GM18951 (cell line): ENCODE measurements at regions of chr9 and their contacts with region 1.

Region 1: DNA sequence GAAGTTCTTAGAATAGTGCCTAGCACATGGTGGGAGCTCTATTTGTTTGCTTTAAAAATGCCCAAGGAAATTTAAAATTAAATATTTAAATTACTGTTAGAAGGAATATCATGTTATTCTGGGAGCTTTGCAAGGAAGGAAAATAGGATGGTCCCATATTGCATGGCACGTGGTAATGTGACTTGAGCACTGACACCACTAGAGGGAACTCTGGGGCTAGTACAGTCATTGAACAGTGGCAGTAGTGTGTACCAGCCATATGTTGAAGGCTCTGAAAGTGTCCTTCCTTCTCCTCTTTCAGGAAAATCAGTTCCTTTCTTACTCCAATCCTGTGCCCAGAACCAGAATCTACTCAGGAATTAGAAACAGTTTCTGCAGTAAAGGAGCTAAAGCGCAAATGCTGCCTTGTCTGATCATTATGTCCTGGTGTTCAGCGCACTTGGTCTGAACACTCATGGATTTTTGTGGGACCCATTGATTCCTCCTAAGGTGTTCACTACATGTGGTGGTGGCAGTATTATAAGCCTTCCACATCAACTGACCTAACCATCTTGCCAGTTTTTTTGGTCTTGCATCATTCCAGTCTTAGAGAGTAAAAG is 54.1 kb downstream of the GDA start:
- POLR2A ChIP-seq: no peak

Region 2: DNA sequence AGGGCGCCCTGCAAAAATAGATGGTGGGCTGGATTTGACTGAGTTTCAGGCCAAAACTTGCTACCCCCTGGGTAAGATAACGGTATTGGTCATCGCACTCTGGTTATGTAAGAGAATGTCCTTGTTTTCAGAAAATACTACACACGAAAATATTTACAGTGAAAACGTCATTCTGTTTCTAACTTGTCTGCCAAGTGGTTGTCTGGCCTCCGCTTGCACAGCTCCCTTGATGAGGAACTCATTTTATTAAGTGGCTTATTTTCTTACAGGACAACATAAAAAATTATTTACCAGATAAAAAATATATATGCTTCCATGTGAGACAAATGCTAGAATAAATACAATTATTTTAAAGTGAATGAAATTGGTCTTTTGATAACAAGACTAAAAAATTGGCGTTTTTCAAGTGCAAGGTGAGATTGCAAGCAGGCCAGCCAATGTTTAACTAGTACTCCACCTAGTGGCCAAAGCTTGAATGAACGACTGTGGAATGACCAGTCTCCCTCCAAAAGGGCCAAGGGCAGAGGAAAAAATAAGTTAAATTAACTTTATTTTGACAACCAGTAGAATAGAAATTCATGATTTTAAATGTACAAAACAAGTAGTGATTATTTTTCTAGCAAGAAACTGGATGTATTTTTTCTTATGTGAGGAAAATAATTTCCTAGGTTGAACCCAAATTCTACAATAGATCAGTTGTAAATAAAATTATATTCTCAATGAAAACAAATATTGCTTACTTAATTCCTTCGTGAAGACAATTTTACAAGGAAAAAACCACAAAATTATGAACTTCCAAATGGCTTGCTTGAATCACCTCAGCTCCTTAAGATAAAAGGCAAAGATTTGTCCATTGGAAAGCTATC is 68.5 kb after region 1 on chr9:
- in situ Hi-C with region 1: loop called (anchors 5 kb)
- POLR2A ChIP-seq: no peak

Region 3: DNA sequence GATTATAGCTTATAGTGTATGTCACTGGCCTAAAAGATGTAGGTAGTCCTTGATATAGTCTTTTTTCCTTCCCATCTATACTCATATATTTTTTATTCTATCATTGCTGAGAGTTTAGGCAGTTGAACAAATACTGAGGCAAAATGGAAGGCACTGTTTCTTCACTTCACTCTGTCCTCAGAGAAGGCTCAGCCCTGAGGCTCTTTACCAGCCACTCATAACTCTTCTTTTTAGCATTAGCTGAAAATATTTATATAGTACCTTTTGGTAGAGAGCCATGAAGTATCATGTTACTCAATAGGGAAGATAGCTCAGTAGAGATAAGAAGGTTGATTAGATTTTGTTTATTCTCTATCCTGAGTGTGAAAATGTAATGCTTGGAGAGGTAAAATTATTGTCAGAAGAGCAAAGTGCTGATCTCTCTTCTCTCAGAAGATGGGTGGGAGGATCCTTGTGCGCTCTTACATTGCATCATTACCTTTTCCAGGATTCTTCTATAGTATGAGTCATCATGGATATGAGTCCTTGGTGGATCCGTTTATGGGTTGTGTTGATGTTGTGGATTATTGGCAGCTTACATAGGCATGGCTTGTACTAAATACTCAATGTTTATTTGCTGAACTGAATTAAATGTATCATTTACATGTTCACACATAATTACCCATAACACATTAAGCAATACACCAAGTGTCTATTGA is 1036.4 kb after region 1 on chr9:
- in situ Hi-C with region 1: no loop called
- POLR2A ChIP-seq: no peak